AG04449 (cell line): ENCODE measurements at regions of chr20 and their contacts with region 1.

Region 1: GRCh38 chr20:38406476-38406875 is 28.7 kb downstream of the SNHG17 start:
- DNase-seq: no peak
- H3K4me3 ChIP-seq: no peak overlapping the region
- CTCF ChIP-seq: no peak

Region 2: DNA sequence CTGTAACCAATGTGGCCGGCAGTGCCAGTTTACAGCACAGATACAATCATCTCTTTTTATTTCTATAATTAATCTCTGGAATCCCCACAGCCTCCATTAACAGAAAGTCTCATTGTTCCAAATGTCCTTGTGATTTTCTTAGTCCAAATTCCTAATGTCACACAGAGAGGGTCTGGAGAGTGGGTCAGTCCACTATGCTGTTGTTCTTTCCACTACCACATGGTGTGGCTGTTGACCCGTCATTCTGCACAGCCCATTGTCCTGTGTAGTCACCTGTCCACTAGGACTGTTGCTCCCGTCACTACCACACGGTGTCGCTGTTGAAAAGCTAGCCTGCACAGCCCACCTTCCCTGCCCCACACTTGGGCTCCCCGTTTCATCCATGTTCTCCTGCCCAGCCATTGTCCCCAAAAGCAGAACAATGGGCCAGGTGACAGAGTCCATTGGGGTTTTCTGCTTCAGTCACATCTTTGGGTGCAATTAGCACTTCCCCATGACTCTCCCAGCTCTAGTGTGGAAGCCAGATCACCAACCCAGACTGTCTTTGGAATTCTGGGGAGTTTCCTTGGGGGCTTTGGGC is 68.8 kb before region 1 on chr20:
- CTCF ChIA-PET with region 1: interaction called, 32 read pairs
- POLR2A ChIA-PET with region 1: no interaction called
- DNase-seq: no peak
- H3K4me3 ChIP-seq: no peak overlapping the region
- CTCF ChIP-seq: no peak

Region 3: GRCh38 chr20:38395165-38395564 is 11.3 kb before region 1 on chr20:
- CTCF ChIA-PET with region 1: interaction called, 24 read pairs
- POLR2A ChIA-PET with region 1: no interaction called
- DNase-seq: no peak
- H3K4me3 ChIP-seq: no peak overlapping the region
- CTCF ChIP-seq: no peak

Region 4: DNA sequence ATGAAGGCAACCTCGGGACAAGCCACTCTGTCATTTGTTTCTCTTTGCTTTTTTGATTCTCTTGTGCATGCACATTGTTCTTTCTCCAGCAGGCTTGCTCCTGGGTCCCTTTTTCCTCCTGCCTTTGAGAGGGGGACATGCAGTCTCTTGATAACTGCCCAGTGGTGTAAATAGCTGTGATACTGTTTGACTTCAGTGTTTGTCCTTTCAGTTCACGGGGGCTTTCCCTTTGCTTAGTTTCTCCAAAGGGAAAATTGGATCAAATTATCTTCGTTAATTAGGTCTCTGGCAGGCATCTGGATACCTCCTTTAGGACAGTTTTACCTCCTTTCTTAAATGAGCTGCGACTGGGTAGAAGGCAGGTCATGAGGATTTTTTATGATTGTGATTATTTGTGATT is 107.7 kb after region 1 on chr20:
- CTCF ChIA-PET with region 1: no interaction called
- POLR2A ChIA-PET with region 1: no interaction called
- DNase-seq: no peak
- H3K4me3 ChIP-seq: no peak overlapping the region
- CTCF ChIP-seq: no peak

Region 5: DNA sequence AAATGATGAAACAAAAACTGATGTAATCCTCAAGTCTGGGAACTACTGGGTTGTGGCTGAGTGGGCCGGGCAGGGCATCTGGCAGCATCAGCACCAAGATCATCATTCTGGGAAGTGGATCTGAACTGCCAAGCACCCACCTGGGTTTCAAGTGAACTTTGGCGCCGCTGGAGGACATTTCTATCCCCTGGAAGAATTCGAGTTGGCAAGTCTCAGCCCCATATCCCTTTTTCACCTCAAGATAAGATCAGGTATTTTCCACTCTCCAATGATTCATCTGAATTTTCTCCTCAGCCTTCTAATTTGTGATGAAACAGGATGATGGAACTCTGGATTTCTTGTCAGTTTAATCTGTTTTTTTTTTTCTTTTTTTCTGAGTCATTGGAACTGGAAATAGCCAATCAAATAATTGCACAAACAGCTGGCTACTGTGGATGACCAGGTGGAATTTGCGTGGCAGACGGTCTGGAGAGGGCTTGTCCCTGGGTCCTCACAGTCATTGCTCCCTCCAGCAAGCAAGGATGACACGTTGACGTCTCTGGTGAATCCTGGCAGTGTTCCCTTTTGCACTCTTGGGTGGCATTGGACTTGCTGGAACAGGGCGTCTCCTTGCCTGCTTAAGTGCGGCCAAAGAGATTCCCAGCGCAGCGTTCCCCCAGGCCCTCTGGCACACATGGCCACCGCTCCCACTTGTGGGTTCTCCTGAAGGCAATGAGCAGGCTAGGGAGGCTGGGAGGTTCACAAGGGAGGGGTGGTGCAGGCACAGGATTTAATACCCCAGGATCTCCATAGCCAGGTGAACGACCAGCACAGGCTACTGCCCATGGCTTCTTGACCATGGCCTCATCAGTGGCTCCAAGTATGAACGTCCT is 636.0 kb after region 1 on chr20:
- CTCF ChIA-PET with region 1: no interaction called
- POLR2A ChIA-PET with region 1: no interaction called
- DNase-seq: no peak
- H3K4me3 ChIP-seq: no peak overlapping the region
- CTCF ChIP-seq: no peak